Activated T-helper 2 cell treated with anti-CD3 and anti-CD28 coated beads, Interferon-gamma antibody, Interleukin-2, Interleukin-4, amounts not matched to agents 10 μg/mL and 5 μg/mL and 100 μg/mL, durations not matched to agents 14 hours and 24 hours and 36 hours (primary cell): ENCODE measurements at regions of chr11 and their contacts with region 1.

Region 1: GRCh38 chr11:43868852-43869567 is 11.6 kb upstream of the ALKBH3 start:
- DNase-seq: peak; percentile 55
- H3K4me3 Mint-ChIP-seq: no peak overlapping the region
- H3K27ac Mint-ChIP-seq: peak overlapping the region; percentile 38
- H3K4me1 Mint-ChIP-seq: peaks cover 27% of the 10 kb centered on the region
- H3K27me3 Mint-ChIP-seq: peaks cover 52% of the 10 kb centered on the region

Region 2: GRCh38 chr11:43311791-43312607 is 557.0 kb before region 1 on chr11 and contains the start of gene API5:
- intact Hi-C with region 1: loop called (anchors 5 kb)
- DNase-seq: peak; percentile 91
- H3K4me3 Mint-ChIP-seq: peak within 1 kb of the TSS; percentile 97
- H3K27ac Mint-ChIP-seq: peak within 1 kb of the TSS; percentile 92
- H3K4me1 Mint-ChIP-seq: peaks cover 32% of the 10 kb centered on the region
- H3K27me3 Mint-ChIP-seq: no peaks in the 10 kb centered on the region
- total RNA-seq, gene API5: 158 and 164 TPM in 2 replicates

Region 3: GRCh38 chr11:43680521-43681400 is 188.2 kb before region 1 on chr11 and contains the start of gene HSD17B12:
- intact Hi-C with region 1: loop called (anchors 2 kb)
- DNase-seq: peak; percentile 99
- H3K4me3 Mint-ChIP-seq: peak within 1 kb of the TSS; percentile 96
- H3K27ac Mint-ChIP-seq: peak within 1 kb of the TSS; percentile 96
- H3K4me1 Mint-ChIP-seq: peaks cover 32% of the 10 kb centered on the region
- H3K27me3 Mint-ChIP-seq: peaks cover 2% of the 10 kb centered on the region
- total RNA-seq, gene HSD17B12: 79.8 and 81.3 TPM in 2 replicates

Region 4: GRCh38 chr11:43797337-43797736 is 71.7 kb before region 1 on chr11:
- intact Hi-C with region 1: no loop called
- DNase-seq: no peak
- H3K4me3 Mint-ChIP-seq: no peak overlapping the region
- H3K27ac Mint-ChIP-seq: no peak overlapping the region
- H3K4me1 Mint-ChIP-seq: no peaks in the 10 kb centered on the region
- H3K27me3 Mint-ChIP-seq: no peaks in the 10 kb centered on the region

Region 5: DNA sequence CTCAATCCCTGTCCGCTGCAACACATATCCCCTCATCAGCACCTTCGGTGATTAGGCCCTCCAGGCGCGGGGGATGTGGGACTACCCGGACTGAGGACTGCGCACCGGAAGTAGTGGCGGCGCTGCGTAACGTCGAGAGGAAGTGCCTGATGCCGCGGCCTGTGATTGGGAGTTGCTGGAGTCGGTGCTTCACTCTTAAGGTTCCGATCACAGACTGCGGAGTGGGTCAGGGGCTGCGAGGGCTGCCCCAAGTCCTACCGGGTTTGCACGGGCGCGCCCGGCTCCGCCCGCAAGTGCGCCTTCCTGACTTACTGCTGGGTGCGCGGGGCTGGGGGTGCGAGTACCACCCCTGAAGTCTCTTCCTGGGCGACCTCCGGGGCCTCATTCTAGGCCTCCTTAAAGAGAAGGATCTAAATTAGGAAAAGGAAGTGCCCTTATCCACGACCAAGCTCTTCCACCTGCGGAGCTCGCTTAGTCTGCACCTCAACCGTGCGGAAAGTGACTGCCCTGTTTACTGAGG is 11.7 kb after region 1 on chr11 and contains the start of gene ALKBH3:
- intact Hi-C with region 1: loop called (anchors 1 kb)
- DNase-seq: peak; percentile 85
- H3K4me3 Mint-ChIP-seq: peak within 1 kb of the TSS; percentile 90
- H3K27ac Mint-ChIP-seq: peak within 1 kb of the TSS; percentile 77
- H3K4me1 Mint-ChIP-seq: peaks cover 16% of the 10 kb centered on the region
- H3K27me3 Mint-ChIP-seq: peaks cover 8% of the 10 kb centered on the region
- total RNA-seq, gene ALKBH3: 32.2 and 32.7 TPM in 2 replicates

Region 6: DNA sequence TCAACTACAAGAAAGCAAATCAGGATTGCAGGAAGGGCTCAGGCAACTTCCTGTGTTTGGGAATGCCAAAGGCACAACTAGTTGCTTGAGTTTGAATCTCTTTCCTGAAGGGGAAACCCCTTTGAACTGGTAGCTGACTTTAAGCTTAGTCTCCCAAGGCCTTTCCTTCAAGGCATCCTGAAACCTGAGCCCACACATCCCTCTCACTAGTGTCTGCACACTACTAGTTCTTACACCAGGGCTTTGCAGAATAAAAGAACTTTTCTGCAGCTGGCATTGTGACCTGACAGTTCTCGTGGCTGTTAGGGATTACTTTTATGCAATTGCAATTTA is 321.8 kb after region 1 on chr11:
- intact Hi-C with region 1: loop called (anchors 10 kb)
- DNase-seq: no peak
- H3K4me3 Mint-ChIP-seq: no peak overlapping the region
- H3K27ac Mint-ChIP-seq: no peak overlapping the region
- H3K4me1 Mint-ChIP-seq: peaks cover 30% of the 10 kb centered on the region
- H3K27me3 Mint-ChIP-seq: no peaks in the 10 kb centered on the region